ENCODE measurements at regions of chr1 and their contacts with region 1.

Region 1: GRCh38 chr1:41122851-41123507 is 101.5 kb upstream of the SLFNL1 start:
- DNase-seq: peak; percentile 68
- H3K4me3 ChIP-seq: no peak overlapping the region
- H3K27ac ChIP-seq: no peak overlapping the region
- H3K4me1 ChIP-seq: no peaks in the 10 kb centered on the region
- H3K27me3 ChIP-seq: no peaks in the 10 kb centered on the region
- CTCF ChIP-seq: peak; percentile 45 to 48
- POLR2A ChIP-seq: no peak

Region 2: DNA sequence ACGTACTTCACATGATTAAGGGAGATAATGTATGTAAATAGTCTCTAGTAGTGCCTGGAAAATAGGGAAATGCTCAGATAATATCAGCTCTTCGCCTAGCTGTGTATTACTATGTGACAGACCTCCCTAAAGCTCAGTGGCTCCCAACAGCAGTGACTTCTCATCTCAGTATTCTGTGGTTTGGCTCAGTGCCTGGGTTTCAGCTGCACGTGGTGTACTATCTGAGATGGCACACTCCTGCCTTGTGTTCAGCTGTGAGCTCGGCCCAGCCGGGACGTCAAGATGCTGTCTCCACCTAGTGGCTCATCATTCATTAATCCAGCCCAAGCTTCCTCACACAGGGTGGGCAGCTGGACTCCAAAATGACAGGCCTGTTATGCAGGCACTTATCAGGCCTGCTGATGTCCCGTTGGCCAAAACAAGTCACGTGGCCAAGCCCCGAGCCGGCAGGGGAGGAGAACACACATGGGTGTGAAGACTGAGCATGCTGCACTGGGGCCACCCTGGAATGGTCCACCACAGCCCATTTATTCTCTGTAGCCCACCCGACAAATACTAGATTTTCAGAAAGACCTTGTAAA is 119.2 kb before region 1 on chr1:
- CTCF ChIA-PET with region 1: interaction called, 11 read pairs
- POLR2A ChIA-PET with region 1: no interaction called
- dilution Hi-C with region 1: no loop called
- intact Hi-C with region 1: no loop called
- DNase-seq: peak; percentile 95
- H3K4me3 ChIP-seq: no peak overlapping the region
- H3K27ac ChIP-seq: peak overlapping the region; percentile 44
- H3K4me1 ChIP-seq: peaks cover 10% of the 10 kb centered on the region
- H3K27me3 ChIP-seq: no peaks in the 10 kb centered on the region
- CTCF ChIP-seq: peak; percentile 60 to 67
- POLR2A ChIP-seq: no peak

Region 3: GRCh38 chr1:41023279-41023990 is 99.5 kb before region 1 on chr1:
- CTCF ChIA-PET with region 1: interaction called, 36 read pairs
- POLR2A ChIA-PET with region 1: no interaction called
- dilution Hi-C with region 1: no loop called
- intact Hi-C with region 1: loop called (anchors 1 kb)
- DNase-seq: no peak
- H3K4me3 ChIP-seq: no peak overlapping the region
- H3K27ac ChIP-seq: no peak overlapping the region
- H3K4me1 ChIP-seq: peaks cover 27% of the 10 kb centered on the region
- H3K27me3 ChIP-seq: no peaks in the 10 kb centered on the region
- CTCF ChIP-seq: peak; percentile 31 to 59
- POLR2A ChIP-seq: no peak

Region 4: DNA sequence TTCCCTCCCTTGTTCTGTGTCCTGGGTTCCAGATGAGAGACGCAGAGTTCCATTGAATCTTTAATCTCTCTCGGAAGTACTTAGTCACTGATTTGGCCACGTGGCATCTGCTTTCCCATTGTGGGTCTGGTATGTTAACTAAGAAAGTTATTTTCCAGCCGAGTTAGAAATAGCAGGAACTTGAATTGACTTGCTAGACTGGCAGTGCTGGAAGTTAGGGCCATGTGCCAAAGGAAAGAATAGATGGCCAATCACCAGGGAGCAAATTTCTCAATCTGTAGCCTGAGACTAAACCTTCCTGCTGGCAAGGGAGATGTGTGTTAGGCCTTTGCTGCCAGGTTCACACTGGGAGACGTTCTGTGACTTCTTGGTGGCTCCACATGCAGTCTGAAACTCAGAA is 77.2 kb before region 1 on chr1:
- CTCF ChIA-PET with region 1: no interaction called
- POLR2A ChIA-PET with region 1: no interaction called
- dilution Hi-C with region 1: no loop called
- intact Hi-C with region 1: loop called (anchors 5 kb)
- DNase-seq: peak; percentile 94
- H3K4me3 ChIP-seq: no peak overlapping the region
- H3K27ac ChIP-seq: peak overlapping the region; percentile 53
- H3K4me1 ChIP-seq: peaks cover 32% of the 10 kb centered on the region
- H3K27me3 ChIP-seq: no peaks in the 10 kb centered on the region
- CTCF ChIP-seq: no peak
- POLR2A ChIP-seq: no peak

Region 5: GRCh38 chr1:41101950-41102607 is 20.9 kb before region 1 on chr1:
- CTCF ChIA-PET with region 1: interaction called, 11 read pairs
- POLR2A ChIA-PET with region 1: no interaction called
- dilution Hi-C with region 1: no loop called
- intact Hi-C with region 1: no loop called
- DNase-seq: peak; percentile 97
- H3K4me3 ChIP-seq: no peak overlapping the region
- H3K27ac ChIP-seq: peak overlapping the region; percentile 24
- H3K4me1 ChIP-seq: peaks cover 15% of the 10 kb centered on the region
- H3K27me3 ChIP-seq: no peaks in the 10 kb centered on the region
- CTCF ChIP-seq: no peak
- POLR2A ChIP-seq: no peak

Region 6: GRCh38 chr1:41109316-41110197 is 13.4 kb before region 1 on chr1:
- CTCF ChIA-PET with region 1: interaction called, 13 read pairs
- POLR2A ChIA-PET with region 1: no interaction called
- dilution Hi-C with region 1: no loop called
- intact Hi-C with region 1: loop called (anchors 2 kb)
- DNase-seq: peak; percentile 95
- H3K4me3 ChIP-seq: peak overlapping the region in 1 of 3 experiments; percentile 59
- H3K27ac ChIP-seq: peak overlapping the region; percentile 95
- H3K4me1 ChIP-seq: peaks cover 27% of the 10 kb centered on the region
- H3K27me3 ChIP-seq: no peaks in the 10 kb centered on the region
- CTCF ChIP-seq: no peak
- POLR2A ChIP-seq: no peak